ENCODE measurements at regions of chr22 and their contacts with region 1.

Region 1: GRCh38 chr22:44701824-44702478 is at the start of gene PRR5:
- DNase-seq: peak; percentile 78
- H3K4me3 Mint-ChIP-seq: peak within 1 kb of the TSS; percentile 72
- H3K27ac Mint-ChIP-seq: peak within 1 kb of the TSS; percentile 40
- H3K4me1 Mint-ChIP-seq: no peaks in the 10 kb centered on the region
- H3K27me3 Mint-ChIP-seq: peaks cover 6% of the 10 kb centered on the region
- total RNA-seq, gene PRR5: 19.7 and 21.6 TPM in 2 replicates

Region 2: GRCh38 chr22:44497218-44497904 is 204.6 kb before region 1 on chr22:
- intact Hi-C with region 1: no loop called
- DNase-seq: no peak
- H3K4me3 Mint-ChIP-seq: peak overlapping the region; percentile 81
- H3K27ac Mint-ChIP-seq: no peak overlapping the region
- H3K4me1 Mint-ChIP-seq: peaks cover 30% of the 10 kb centered on the region
- H3K27me3 Mint-ChIP-seq: no peaks in the 10 kb centered on the region

Region 3: GRCh38 chr22:44616882-44617655 is 84.9 kb before region 1 on chr22:
- intact Hi-C with region 1: no loop called
- DNase-seq: no peak
- H3K4me3 Mint-ChIP-seq: no peak overlapping the region
- H3K27ac Mint-ChIP-seq: no peak overlapping the region
- H3K4me1 Mint-ChIP-seq: peaks cover 6% of the 10 kb centered on the region
- H3K27me3 Mint-ChIP-seq: peaks cover 2% of the 10 kb centered on the region

Region 4: GRCh38 chr22:44668190-44668885 is 33.6 kb before region 1 on chr22:
- intact Hi-C with region 1: loop called (anchors 1 kb)
- DNase-seq: peak; percentile 41
- H3K4me3 Mint-ChIP-seq: peak overlapping the region; percentile 83
- H3K27ac Mint-ChIP-seq: peak overlapping the region; percentile 85
- H3K4me1 Mint-ChIP-seq: peaks cover 57% of the 10 kb centered on the region
- H3K27me3 Mint-ChIP-seq: peaks cover 16% of the 10 kb centered on the region

Region 5: GRCh38 chr22:44735540-44736488 is 33.9 kb after region 1 on chr22:
- intact Hi-C with region 1: loop called (anchors 1 kb)
- DNase-seq: peak; percentile 63
- H3K4me3 Mint-ChIP-seq: no peak overlapping the region
- H3K27ac Mint-ChIP-seq: no peak overlapping the region
- H3K4me1 Mint-ChIP-seq: no peaks in the 10 kb centered on the region
- H3K27me3 Mint-ChIP-seq: no peaks in the 10 kb centered on the region